Heart left ventricle (tissue), 16 donors: ENCODE measurements at regions of chr6 and their contacts with region 1.

Region 1: GRCh38 chr6:55617272-55617671 is 38.3 kb upstream of the HMGCLL1 start:
- DNase-seq: no peak
- ATAC-seq: peak in 2 of 4 donors; percentile 51 to 62
- H3K4me3 ChIP-seq: no peak overlapping the region
- H3K27ac ChIP-seq: no peak overlapping the region
- H3K4me1 ChIP-seq: no peaks in the 10 kb centered on the region
- H3K27me3 ChIP-seq: no peaks in the 10 kb centered on the region
- CTCF ChIP-seq: peak in 11 of 12 donors; percentile 10 to 56 (median 24)
- POLR2A ChIP-seq: no peak

Region 2: DNA sequence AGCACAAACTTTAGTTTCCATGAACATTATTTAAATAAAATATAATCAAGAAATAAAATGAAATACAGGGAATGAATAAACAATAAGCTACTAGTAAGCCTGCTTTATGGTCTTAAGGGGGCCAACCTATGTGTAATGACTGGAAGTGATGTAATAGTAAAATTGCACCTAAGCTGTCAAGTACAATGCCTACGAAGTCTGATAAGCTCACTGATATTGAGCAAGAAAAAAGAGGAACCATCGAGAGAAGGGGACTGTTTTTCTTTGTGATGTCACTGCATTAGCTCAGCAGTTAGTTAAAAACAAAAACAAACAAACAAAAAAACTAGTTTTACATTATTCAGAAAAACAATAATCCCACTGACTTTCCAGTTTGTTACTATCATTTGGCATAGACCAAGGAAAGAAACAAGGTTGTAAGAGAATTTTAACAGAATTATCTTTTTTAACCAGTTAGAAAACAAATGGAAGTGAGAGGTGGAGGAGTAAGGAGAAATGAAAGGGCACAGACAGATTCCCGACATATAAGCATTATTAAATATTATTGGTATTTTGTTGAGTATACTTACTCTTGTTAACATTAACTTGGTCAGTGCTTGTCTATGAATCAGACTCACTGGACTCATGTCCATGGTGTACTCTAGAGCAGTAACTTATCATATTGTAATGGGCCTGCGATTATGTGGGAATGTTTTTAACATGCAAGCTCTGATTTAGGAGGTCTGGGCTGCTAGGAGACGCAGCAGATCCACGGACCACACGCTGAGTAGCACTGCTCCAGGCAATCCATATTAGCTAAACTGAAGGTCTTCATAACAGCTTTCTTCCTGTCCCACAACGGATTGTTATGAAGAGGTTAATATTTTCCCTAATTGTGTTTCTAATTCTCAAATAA is 61.3 kb after region 1 on chr6:
- intact Hi-C with region 1: no loop called
- DNase-seq: no peak
- ATAC-seq: no peak
- H3K4me3 ChIP-seq: no peak overlapping the region
- H3K27ac ChIP-seq: no peak overlapping the region
- H3K4me1 ChIP-seq: peaks cover 0 to 5% (median 0%) of the 10 kb centered on the region in 12 donors
- H3K27me3 ChIP-seq: no peaks in the 10 kb centered on the region
- CTCF ChIP-seq: no peak
- POLR2A ChIP-seq: no peak

Region 3: DNA sequence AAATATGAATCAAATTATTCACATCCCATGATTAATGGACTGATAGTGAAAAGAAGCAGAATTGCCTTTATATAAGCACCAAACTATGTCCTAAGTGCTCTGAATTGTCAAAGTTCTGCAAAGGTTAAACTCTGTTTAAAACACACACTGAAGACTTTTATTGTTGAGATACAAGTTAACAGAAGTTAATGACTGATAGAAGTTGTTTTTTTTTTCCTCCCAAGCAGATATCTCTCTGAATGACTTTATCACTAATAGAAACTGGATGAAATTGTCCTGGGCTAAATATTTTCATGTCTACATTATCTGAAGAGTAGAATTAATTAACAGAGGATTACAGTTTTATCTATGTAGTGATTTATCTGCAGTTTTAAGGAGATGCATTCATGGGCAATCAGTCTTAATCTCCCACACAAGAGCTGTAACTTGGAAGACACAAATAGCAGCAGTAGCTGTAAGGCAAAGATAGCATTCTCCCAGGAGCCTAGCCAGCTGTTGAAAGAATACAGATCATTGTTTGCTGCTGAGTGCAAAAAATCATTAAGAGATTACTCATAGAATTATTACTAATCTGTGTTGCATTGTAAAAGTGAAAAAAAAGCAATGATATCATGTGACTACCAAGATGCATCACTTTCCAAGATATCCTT is 208.3 kb after region 1 on chr6:
- intact Hi-C with region 1: no loop called
- DNase-seq: peak in 2 of 5 donors; percentile 17 to 26
- ATAC-seq: peak in 2 of 4 donors; percentile 51 to 92
- H3K4me3 ChIP-seq: no peak overlapping the region
- H3K27ac ChIP-seq: no peak overlapping the region
- H3K4me1 ChIP-seq: peaks cover 0 to 15% (median 6%) of the 10 kb centered on the region in 12 donors
- H3K27me3 ChIP-seq: no peaks in the 10 kb centered on the region
- CTCF ChIP-seq: no peak
- POLR2A ChIP-seq: no peak

Region 4: GRCh38 chr6:55886185-55886836 is 269.0 kb after region 1 on chr6:
- intact Hi-C with region 1: loop called in 6 of 10 experiments (anchors 2 to 10 kb)
- DNase-seq: no peak
- ATAC-seq: no peak
- H3K4me3 ChIP-seq: no peak overlapping the region
- H3K27ac ChIP-seq: no peak overlapping the region
- H3K4me1 ChIP-seq: peaks cover 0 to 5% (median 0%) of the 10 kb centered on the region in 12 donors
- H3K27me3 ChIP-seq: no peaks in the 10 kb centered on the region
- CTCF ChIP-seq: peak in 11 of 12 donors; percentile 19 to 61 (median 40)
- POLR2A ChIP-seq: no peak

Region 5: DNA sequence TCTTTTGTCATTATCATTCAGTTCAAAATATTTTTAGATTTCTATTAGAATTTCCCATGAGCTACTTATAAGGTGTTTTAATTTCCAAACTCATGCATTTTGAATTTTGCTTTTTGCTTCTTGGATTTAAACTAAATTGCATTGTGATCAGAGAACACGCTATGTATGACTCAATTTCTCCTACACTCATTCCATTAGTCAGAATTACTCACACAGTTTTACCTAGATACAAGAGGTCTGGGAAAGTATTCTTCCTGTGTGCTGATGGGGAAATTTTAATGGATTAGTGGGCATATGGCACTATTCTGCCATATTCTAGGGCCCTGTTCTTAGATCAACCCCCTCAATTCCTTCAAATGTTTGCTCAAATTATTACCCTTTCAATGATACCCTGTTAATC is 308.0 kb after region 1 on chr6:
- intact Hi-C with region 1: no loop called
- DNase-seq: no peak
- ATAC-seq: no peak
- H3K4me3 ChIP-seq: no peak overlapping the region
- H3K27ac ChIP-seq: no peak overlapping the region
- H3K4me1 ChIP-seq: no peaks in the 10 kb centered on the region
- H3K27me3 ChIP-seq: no peaks in the 10 kb centered on the region
- CTCF ChIP-seq: no peak
- POLR2A ChIP-seq: no peak